SK-N-SH (cell line): ENCODE measurements at regions of chr2 and their contacts with region 1.

Region 1: GRCh38 chr2:191555092-191555742 is 122.7 kb upstream of the NABP1 start:
- DNase-seq: peak; percentile 72
- H3K4me3 ChIP-seq: peak overlapping the region in 1 of 2 experiments; percentile 39; a peak in 1 of 4 replicates
- H3K27ac ChIP-seq: no peak overlapping the region
- H3K4me1 ChIP-seq: peaks cover 0 to 3% of the 10 kb centered on the region in 2 experiments; a peak in 1 of 4 replicates
- H3K27me3 ChIP-seq: no peaks in the 10 kb centered on the region
- CTCF ChIP-seq: peak; percentile 87
- EP300 ChIP-seq: no peak
- RAD21 ChIP-seq: peak; percentile 89

Region 2: DNA sequence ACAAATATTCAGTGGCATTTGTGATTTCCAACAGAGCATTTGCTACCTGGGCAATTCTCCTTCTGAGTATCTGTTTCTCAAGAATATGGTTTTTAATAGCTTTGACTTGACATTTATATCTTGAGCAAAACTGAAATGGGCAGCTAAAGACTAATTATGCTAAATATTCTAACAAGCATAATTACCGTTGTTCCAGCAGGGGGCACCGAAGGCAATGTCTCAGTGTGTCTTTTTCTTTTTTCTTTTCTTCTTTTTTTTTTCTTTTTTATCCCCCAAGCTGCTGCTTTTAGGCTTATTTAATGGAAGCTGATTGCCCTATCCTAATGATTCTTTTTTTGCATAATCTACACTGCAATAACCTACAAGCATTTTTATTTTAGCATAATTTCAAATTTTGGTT is 16.1 kb before region 1 on chr2:
- CTCF ChIA-PET with region 1: interaction called, 46 read pairs
- POLR2A ChIA-PET with region 1: no interaction called
- DNase-seq: peak; percentile 39
- H3K4me3 ChIP-seq: no peak overlapping the region
- H3K27ac ChIP-seq: peak overlapping the region in 1 of 2 experiments; percentile 78; a peak in 2 of 4 replicates
- H3K4me1 ChIP-seq: peaks cover 0 to 17% of the 10 kb centered on the region in 2 experiments; a peak in 2 of 4 replicates
- H3K27me3 ChIP-seq: no peaks in the 10 kb centered on the region
- CTCF ChIP-seq: peak; percentile 75
- EP300 ChIP-seq: no peak
- RAD21 ChIP-seq: peak; percentile 43

Region 3: DNA sequence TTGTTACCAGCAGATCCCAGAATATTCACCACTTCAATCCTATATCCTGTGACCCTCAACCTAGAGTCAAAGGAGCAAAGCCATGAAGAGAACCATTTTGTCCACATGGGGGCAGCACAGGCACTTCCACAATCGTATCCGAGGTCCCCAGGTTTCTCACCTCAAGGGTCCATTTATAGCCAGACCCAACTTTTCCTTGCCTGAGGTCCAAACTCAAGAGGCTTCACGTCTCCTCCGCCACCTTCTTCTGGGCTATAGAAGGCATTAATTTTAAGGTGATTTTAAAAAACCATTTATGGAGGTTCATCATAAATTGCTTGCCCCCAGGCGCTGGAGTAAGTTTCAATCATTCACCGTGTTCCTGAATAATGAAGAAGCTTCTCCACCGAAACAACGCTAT is 11.1 kb after region 1 on chr2:
- CTCF ChIA-PET with region 1: interaction called, 41 read pairs
- POLR2A ChIA-PET with region 1: no interaction called
- DNase-seq: peak; percentile 66
- H3K4me3 ChIP-seq: peak overlapping the region in 1 of 2 experiments; percentile 18; a peak in 1 of 4 replicates
- H3K27ac ChIP-seq: no peak overlapping the region
- H3K4me1 ChIP-seq: no peaks in the 10 kb centered on the region; a peak in 2 of 4 replicates
- H3K27me3 ChIP-seq: no peaks in the 10 kb centered on the region
- CTCF ChIP-seq: peak; percentile 88
- EP300 ChIP-seq: no peak
- RAD21 ChIP-seq: peak; percentile 81

Region 4: GRCh38 chr2:191811807-191812602 is 256.8 kb after region 1 on chr2:
- CTCF ChIA-PET with region 1: interaction called, 18 read pairs
- POLR2A ChIA-PET with region 1: no interaction called
- DNase-seq: peak; percentile 54
- H3K4me3 ChIP-seq: peak overlapping the region in 1 of 2 experiments; percentile 8; a peak in 1 of 4 replicates
- H3K27ac ChIP-seq: no peak overlapping the region
- H3K4me1 ChIP-seq: peaks cover 0 to 6% of the 10 kb centered on the region in 2 experiments; a peak in 2 of 4 replicates
- H3K27me3 ChIP-seq: no peaks in the 10 kb centered on the region
- CTCF ChIP-seq: peak; percentile 93
- EP300 ChIP-seq: no peak
- RAD21 ChIP-seq: peak; percentile 98